Keratinocyte (primary cell): ENCODE measurements at regions of chr21 and their contacts with region 1.

Region 1: GRCh38 chr21:42340187-42341050 is 10.4 kb downstream of the TFF2 start:
- DNase-seq: no peak
- H3K4me3 ChIP-seq: no peak overlapping the region
- H3K27ac ChIP-seq: no peak overlapping the region
- H3K4me1 ChIP-seq: no peaks in the 10 kb centered on the region
- H3K27me3 ChIP-seq: peaks cover 4% of the 10 kb centered on the region
- CTCF ChIP-seq: no peak

Region 2: GRCh38 chr21:42080788-42081083 is 259.7 kb before region 1 on chr21:
- dilution Hi-C with region 1: no loop called
- DNase-seq: no peak
- H3K4me3 ChIP-seq: no peak overlapping the region
- H3K27ac ChIP-seq: no peak overlapping the region
- H3K4me1 ChIP-seq: peaks cover 13% of the 10 kb centered on the region
- H3K27me3 ChIP-seq: peaks cover 9% of the 10 kb centered on the region
- CTCF ChIP-seq: no peak

Region 3: GRCh38 chr21:42424914-42425541 is 84.6 kb after region 1 on chr21:
- dilution Hi-C with region 1: loop called (anchors 10 kb)
- DNase-seq: no peak
- H3K4me3 ChIP-seq: no peak overlapping the region
- H3K27ac ChIP-seq: no peak overlapping the region
- H3K4me1 ChIP-seq: no peaks in the 10 kb centered on the region
- H3K27me3 ChIP-seq: peaks cover 7% of the 10 kb centered on the region
- CTCF ChIP-seq: no peak